Activated naive CD4-positive, alpha-beta T cell treated with anti-CD3 and anti-CD28 coated beads for 36 hours (primary cell): ENCODE measurements at regions of chr10 and their contacts with region 1.

Region 1: DNA sequence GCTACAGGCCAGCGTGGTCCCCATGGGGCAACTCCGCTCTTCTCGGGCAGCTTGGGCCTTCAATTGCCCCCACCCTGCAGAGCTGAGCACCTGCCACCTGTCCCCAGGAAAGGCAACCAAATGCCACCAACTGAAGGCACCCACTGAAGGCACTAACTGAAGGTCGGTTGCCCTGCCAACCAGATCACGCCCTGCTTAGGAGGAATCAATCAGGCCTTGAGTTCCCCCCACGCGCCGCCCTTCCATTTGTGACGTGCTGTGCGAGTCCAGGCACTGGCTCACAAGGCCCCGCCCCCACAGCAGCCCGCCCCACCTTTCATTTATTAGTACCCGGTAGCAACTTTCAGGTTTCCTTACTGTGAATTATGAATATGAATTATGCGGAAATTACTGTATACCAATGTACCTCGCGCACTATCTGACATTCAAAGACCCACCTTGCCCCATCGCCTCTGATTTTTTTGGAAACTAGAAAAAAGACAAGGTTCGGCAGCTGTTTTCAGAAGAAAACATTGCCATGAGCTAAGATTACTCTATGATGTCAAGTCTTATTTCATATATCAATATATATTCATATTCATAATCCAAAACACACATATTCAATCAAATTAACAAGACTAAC is 83.6 kb upstream of the ABI1 start:
- DNase-seq: no peak
- H3K4me3 Mint-ChIP-seq: no peak overlapping the region
- H3K27ac Mint-ChIP-seq: no peak overlapping the region
- H3K4me1 Mint-ChIP-seq: no peaks in the 10 kb centered on the region
- H3K27me3 Mint-ChIP-seq: peaks cover 14% of the 10 kb centered on the region

Region 2: DNA sequence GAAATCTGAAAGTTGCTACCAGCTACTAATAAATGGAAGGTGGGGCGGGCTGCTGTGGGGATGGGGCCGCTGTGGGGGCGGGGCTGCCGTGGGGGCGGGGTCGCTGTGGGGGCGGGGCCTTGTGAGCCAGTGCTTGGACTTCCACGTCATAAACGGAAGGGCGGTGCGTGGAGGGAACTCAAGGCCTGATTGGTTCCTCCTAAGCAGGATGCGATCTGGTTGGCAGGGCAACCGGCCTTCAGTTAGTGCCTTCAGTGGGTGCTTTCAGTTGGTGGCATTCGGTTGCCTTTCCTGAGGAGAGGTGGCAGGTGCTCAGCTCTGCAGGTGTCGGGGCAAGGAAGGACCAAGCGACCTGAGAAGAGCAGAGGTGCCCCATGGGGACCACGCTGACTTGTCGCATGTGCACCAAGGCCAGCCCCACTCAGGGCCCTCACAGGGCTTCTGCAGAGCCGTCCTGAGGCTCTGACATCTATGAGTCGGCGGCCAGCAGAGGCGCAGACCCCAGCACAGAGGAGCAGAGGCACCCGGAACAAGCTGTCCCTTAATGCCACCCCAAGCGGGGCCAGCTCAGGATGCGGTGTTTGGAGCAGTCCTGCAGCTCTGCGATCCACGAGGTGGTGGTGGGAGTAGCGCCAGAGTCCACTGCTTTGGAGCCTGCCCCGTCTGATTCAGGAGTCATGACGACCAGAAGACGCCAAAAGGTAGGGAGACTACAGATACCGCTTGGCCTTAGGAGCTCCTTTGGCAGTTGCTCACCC is 301.3 kb before region 1 on chr10:
- CTCF ChIA-PET with region 1: no interaction called
- intact Hi-C with region 1: loop called (anchors 1 kb)
- DNase-seq: no peak
- H3K4me3 Mint-ChIP-seq: no peak overlapping the region
- H3K27ac Mint-ChIP-seq: no peak overlapping the region
- H3K4me1 Mint-ChIP-seq: peaks cover 10% of the 10 kb centered on the region
- H3K27me3 Mint-ChIP-seq: no peaks in the 10 kb centered on the region

Region 3: DNA sequence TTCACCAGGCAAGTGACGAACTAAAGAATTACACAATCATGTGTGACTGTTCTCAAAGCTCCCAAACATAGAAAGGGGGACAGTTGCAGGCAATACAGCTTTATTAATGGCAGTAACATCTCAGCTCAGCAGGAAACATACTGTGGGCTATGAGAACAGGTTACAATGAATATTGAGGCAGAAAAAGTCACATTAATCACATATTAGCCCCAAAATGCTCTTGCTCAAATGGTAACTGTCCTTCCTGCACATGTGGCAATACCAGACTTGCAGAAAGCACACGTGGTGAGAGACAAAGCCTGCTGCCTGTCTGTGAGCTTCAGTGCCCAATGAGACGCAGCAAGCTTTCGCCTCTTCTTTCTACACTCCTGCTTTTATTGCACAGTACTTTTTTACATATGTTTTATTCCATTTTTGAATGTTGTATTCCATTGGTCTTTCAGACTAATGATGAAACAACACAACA is 401.1 kb after region 1 on chr10:
- CTCF ChIA-PET with region 1: no interaction called
- intact Hi-C with region 1: loop called (anchors 1 kb)
- DNase-seq: no peak
- H3K4me3 Mint-ChIP-seq: no peak overlapping the region
- H3K27ac Mint-ChIP-seq: peak overlapping the region; percentile 42
- H3K4me1 Mint-ChIP-seq: peaks cover 25% of the 10 kb centered on the region
- H3K27me3 Mint-ChIP-seq: peaks cover 6% of the 10 kb centered on the region